CD14-positive monocyte (primary cell): ENCODE measurements at regions of chr12 and their contacts with region 1.

Region 1: GRCh38 chr12:11581179-11581755 is 68.2 kb upstream of the ETV6 start:
- DNase-seq: peak; percentile 59 to 79 (median 72)
- H3K4me3 ChIP-seq: no peak overlapping the region
- H3K4me3 Mint-ChIP-seq: no peak overlapping the region
- H3K27ac ChIP-seq: no peak overlapping the region
- H3K27ac Mint-ChIP-seq: peak overlapping the region in 2 of 7 donors; percentile 30 to 35
- H3K4me1 ChIP-seq: peaks cover 43 to 55% of the 10 kb centered on the region in 2 donors
- H3K4me1 Mint-ChIP-seq: peaks cover 53% of the 10 kb centered on the region
- H3K27me3 ChIP-seq: no peaks in the 10 kb centered on the region
- H3K27me3 Mint-ChIP-seq: peaks cover 0 to 1% (median 1%) of the 10 kb centered on the region in 3 donors
- CTCF ChIP-seq: peak; percentile 84

Region 2: DNA sequence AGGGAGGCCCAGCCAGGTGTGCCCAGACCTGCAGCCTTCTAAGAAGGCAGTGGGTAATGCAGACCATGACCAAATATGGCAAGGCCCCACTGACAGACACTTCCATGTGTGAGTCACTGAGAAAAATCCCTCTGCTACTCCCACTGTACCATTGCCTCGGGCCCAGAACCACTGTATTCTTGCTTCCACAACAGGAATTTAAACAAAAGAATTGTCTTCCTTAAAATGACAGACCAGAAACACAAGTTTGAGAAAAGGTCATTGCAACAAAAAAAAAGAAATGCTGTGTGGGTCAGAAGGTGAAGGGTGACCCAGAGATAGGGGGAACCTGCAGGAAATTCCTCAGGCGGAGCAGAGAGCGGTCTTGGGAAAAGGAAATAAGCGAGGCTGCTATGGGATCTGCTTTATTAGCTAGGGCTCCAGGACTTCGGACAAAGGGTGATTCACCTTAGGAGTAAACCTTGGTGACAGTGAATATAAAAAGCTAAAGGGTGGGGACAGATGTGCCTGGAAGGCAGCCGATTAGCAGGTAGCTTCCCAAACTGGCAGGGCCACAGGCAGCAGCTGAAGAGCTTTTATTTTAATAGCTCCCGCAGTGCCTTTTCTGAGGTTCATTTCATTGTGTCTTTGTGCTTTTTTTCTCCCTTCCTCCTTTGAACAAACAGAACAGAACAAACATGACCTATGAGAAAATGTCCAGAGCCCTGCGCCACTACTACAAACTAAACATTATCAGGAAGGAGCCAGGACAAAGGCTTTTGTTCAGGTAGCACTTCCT is 304.2 kb after region 1 on chr12:
- intact Hi-C with region 1: loop called in 1 of 2 experiments (anchors 10 kb)
- DNase-seq: peak; percentile 51 to 89 (median 70)
- H3K4me3 ChIP-seq: peak overlapping the region in 1 of 3 experiments; percentile 21
- H3K4me3 Mint-ChIP-seq: no peak overlapping the region
- H3K27ac ChIP-seq: peak overlapping the region; percentile 88 to 92
- H3K27ac Mint-ChIP-seq: peak overlapping the region; percentile 81 to 94 (median 89)
- H3K4me1 ChIP-seq: peaks cover 31 to 33% of the 10 kb centered on the region in 2 donors
- H3K4me1 Mint-ChIP-seq: peaks cover 38% of the 10 kb centered on the region
- H3K27me3 ChIP-seq: no peaks in the 10 kb centered on the region
- H3K27me3 Mint-ChIP-seq: no peaks in the 10 kb centered on the region
- CTCF ChIP-seq: no peak